SK-N-SH (cell line): ENCODE measurements at regions of chr16 and their contacts with region 1.

Region 1: DNA sequence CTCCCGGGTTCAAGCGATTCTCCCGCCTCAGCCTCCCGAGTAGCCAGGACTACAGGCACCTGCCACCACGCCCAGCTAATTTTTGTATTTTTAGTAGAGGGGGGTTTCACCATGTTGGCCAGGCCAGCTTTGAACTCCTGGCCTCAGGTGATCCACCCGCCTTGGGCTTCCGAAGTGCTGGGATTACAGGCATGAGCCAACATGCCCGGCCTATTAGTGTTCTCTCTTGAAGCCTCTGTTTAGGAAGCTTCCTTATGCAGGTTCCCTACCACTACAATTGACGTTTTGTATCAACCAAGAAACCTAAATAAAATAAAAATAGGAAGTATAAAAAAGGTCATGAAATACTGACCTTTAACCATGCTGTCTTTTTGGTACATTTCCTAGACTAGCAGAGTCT is 16.0 kb downstream of the CHST5 start:
- DNase-seq: no peak
- H3K4me3 ChIP-seq: no peak overlapping the region
- H3K27ac ChIP-seq: no peak overlapping the region
- H3K4me1 ChIP-seq: no peaks in the 10 kb centered on the region; a peak in 1 of 4 replicates
- H3K27me3 ChIP-seq: no peaks in the 10 kb centered on the region
- CTCF ChIP-seq: no peak
- EP300 ChIP-seq: no peak
- RAD21 ChIP-seq: no peak

Region 2: GRCh38 chr16:75471723-75472633 is 47.9 kb before region 1 on chr16:
- CTCF ChIA-PET with region 1: interaction called, 40 read pairs
- POLR2A ChIA-PET with region 1: interaction called, 6 read pairs
- DNase-seq: peak; percentile 91
- H3K4me3 ChIP-seq: no peak overlapping the region; a peak in 1 of 4 replicates
- H3K27ac ChIP-seq: no peak overlapping the region
- H3K4me1 ChIP-seq: no peaks in the 10 kb centered on the region
- H3K27me3 ChIP-seq: no peaks in the 10 kb centered on the region
- CTCF ChIP-seq: peak; percentile 74
- EP300 ChIP-seq: no peak
- RAD21 ChIP-seq: peak; percentile 92

Region 3: GRCh38 chr16:75495076-75495674 is 24.7 kb before region 1 on chr16 and contains the start of gene CHST6:
- CTCF ChIA-PET with region 1: interaction called, 15 read pairs
- POLR2A ChIA-PET with region 1: interaction called, 3 read pairs
- DNase-seq: peak; percentile 67
- H3K4me3 ChIP-seq: peak within 1 kb of the TSS in 1 of 2 experiments; percentile 37; a peak in 2 of 4 replicates
- H3K27ac ChIP-seq: no peak within 1 kb of the TSS
- H3K4me1 ChIP-seq: peaks cover 7 to 12% of the 10 kb centered on the region in 2 experiments; a peak in 2 of 4 replicates
- H3K27me3 ChIP-seq: no peaks in the 10 kb centered on the region
- CTCF ChIP-seq: no peak
- EP300 ChIP-seq: no peak
- RAD21 ChIP-seq: no peak
- polyA plus RNA-seq, gene CHST6: 0.26 and 0.30 TPM in 2 replicates

Region 4: DNA sequence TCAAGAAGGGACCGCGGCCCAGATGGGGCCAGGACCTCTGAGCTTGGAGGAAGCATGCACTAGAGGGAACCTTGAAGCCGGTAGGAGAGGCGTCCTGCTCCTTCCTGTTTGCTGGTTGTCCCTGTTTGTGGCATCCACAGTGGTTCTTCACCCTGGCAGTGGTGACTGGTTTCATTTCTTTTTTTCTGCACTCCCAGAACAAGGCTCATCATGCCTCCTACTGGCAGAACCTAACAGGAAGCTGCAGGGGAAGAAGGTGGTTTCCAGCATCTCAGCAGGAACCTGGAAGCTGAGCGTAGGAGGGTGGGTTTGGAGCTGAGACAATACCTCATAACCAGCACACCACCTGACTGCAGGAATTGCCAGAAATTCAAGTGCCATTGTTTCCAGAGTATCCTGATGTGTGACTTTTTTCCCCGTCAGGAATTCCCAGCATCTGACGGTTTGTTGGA is 30.4 kb after region 1 on chr16:
- CTCF ChIA-PET with region 1: interaction called, 16 read pairs
- POLR2A ChIA-PET with region 1: no interaction called
- DNase-seq: no peak
- H3K4me3 ChIP-seq: no peak overlapping the region
- H3K27ac ChIP-seq: no peak overlapping the region
- H3K4me1 ChIP-seq: no peaks in the 10 kb centered on the region; a peak in 1 of 4 replicates
- H3K27me3 ChIP-seq: no peaks in the 10 kb centered on the region
- CTCF ChIP-seq: peak; percentile 45; the same call in 1 of the 2 replicates
- EP300 ChIP-seq: no peak
- RAD21 ChIP-seq: peak; percentile 51

Region 5: GRCh38 chr16:75622761-75623605 is 103.1 kb after region 1 on chr16 and contains the start of gene ADAT1:
- CTCF ChIA-PET with region 1: interaction called, 11 read pairs
- POLR2A ChIA-PET with region 1: interaction called, 8 read pairs
- DNase-seq: peak; percentile 90
- H3K4me3 ChIP-seq: peak within 1 kb of the TSS; percentile 85
- H3K27ac ChIP-seq: peak within 1 kb of the TSS; percentile 84 to 89
- H3K4me1 ChIP-seq: peaks cover 6 to 14% of the 10 kb centered on the region in 2 experiments; a peak in 3 of 4 replicates
- H3K27me3 ChIP-seq: no peaks in the 10 kb centered on the region
- CTCF ChIP-seq: no peak
- EP300 ChIP-seq: no peak
- RAD21 ChIP-seq: no peak
- polyA plus RNA-seq, gene ADAT1: 51.1 and 67.7 TPM in 2 replicates

Region 6: DNA sequence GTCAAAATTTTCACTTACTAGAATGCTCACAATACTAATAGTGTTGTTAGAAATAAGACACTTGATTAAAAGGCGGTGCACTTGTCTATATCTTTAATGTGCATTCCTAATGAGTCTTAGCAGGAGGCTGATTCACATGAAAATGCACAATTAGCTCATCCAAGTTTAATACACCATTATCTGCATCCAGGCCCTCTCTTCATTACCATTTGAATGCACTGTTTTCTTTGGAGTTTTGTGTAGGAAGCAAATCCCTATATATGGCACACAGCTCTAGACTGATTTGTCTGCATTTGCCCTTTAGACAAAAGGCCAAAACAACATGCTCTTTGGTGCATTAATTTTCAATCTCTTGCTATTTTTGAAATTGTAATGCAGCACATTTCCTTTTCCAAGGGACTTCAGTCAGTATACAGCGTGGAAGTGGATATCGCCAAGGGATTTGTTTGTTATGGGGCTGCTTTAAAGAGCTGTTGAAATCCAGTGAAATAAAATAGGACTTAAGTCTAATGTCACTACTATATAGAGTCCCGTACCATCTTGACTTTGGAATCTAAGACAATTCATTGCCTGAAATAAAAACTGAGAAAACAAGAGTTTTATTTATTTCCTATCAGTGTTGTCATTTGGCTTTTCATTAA is 464.0 kb after region 1 on chr16:
- CTCF ChIA-PET with region 1: no interaction called
- POLR2A ChIA-PET with region 1: no interaction called
- DNase-seq: no peak
- H3K4me3 ChIP-seq: no peak overlapping the region
- H3K27ac ChIP-seq: no peak overlapping the region
- H3K4me1 ChIP-seq: no peaks in the 10 kb centered on the region
- H3K27me3 ChIP-seq: no peaks in the 10 kb centered on the region
- CTCF ChIP-seq: no peak
- EP300 ChIP-seq: no peak
- RAD21 ChIP-seq: no peak